ENCODE measurements at regions of chr14 and their contacts with region 1.

Region 1: DNA sequence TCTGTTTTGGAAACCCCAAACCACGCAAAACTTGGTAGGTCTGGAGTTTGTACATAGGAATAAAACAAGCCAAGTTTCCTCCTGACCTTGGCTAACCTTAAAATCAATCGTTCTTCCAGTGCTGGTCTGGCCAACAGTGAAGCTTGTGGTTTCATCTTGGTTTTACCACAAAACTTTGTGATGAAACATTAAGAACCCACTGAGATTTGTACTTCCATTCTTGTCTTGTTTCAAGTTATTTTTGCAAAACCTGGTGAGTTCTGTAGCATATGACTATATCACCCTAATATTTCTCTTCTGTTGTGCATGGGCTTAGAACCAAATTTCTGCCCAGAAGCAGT is 26.4 kb downstream of the SIX1 start:
- DNase-seq: no peak
- ATAC-seq: no peak
- H3K4me3 ChIP-seq: no peak overlapping the region
- H3K27ac ChIP-seq: no peak overlapping the region
- H3K4me1 ChIP-seq: peaks cover 0 to 7% of the 10 kb centered on the region in 2 experiments; a peak in 1 of 4 replicates
- H3K27me3 ChIP-seq: no peaks in the 10 kb centered on the region
- CTCF ChIP-seq: no peak
- POLR2A ChIP-seq: no peak
- RAD21 ChIP-seq: no peak

Region 2: GRCh38 chr14:59897761-59898383 is 725.0 kb before region 1 on chr14:
- CTCF ChIA-PET with region 1: no interaction called
- POLR2A ChIA-PET with region 1: no interaction called
- RAD21 ChIA-PET with region 1: no interaction called
- intact Hi-C with region 1: no loop called
- DNase-seq: peak; percentile 10
- ATAC-seq: peak; percentile 81
- H3K4me3 ChIP-seq: no peak overlapping the region
- H3K27ac ChIP-seq: no peak overlapping the region
- H3K4me1 ChIP-seq: no peaks in the 10 kb centered on the region
- H3K27me3 ChIP-seq: no peaks in the 10 kb centered on the region
- CTCF ChIP-seq: peak; percentile 44 to 57 (median 54); a peak in 5 of 6 replicates
- POLR2A ChIP-seq: no peak
- RAD21 ChIP-seq: peak; percentile 68

Region 3: GRCh38 chr14:60758885-60759284 is 136.0 kb after region 1 on chr14:
- CTCF ChIA-PET with region 1: no interaction called
- POLR2A ChIA-PET with region 1: no interaction called
- RAD21 ChIA-PET with region 1: no interaction called
- intact Hi-C with region 1: no loop called
- DNase-seq: no peak
- ATAC-seq: no peak
- H3K4me3 ChIP-seq: no peak overlapping the region
- H3K27ac ChIP-seq: no peak overlapping the region
- H3K4me1 ChIP-seq: peaks cover 26 to 46% of the 10 kb centered on the region in 2 experiments
- H3K27me3 ChIP-seq: no peaks in the 10 kb centered on the region
- CTCF ChIP-seq: no peak
- POLR2A ChIP-seq: no peak
- RAD21 ChIP-seq: no peak

Region 4: DNA sequence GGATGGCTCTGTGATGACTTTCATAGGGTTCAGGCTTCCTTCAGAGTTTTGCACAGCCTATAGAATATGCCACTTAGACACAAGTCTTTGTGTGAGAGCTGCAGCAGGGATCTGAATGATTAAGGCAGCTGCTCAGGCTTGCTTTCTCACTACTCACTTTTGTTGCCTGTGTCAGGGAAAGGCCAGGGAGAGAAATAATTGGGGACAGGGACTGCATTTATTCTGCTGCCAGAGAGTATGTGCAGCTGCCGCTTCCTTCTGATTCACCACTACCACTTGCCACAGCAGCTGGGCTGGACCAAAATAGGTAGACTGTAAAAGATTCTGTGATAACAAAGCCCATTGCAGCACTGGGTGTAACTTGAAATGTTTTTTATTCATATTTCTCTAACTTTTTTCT is 308.3 kb after region 1 on chr14:
- CTCF ChIA-PET with region 1: no interaction called
- POLR2A ChIA-PET with region 1: no interaction called
- RAD21 ChIA-PET with region 1: no interaction called
- intact Hi-C with region 1: no loop called
- DNase-seq: no peak
- ATAC-seq: no peak
- H3K4me3 ChIP-seq: no peak overlapping the region
- H3K27ac ChIP-seq: no peak overlapping the region
- H3K4me1 ChIP-seq: no peaks in the 10 kb centered on the region
- H3K27me3 ChIP-seq: no peaks in the 10 kb centered on the region
- CTCF ChIP-seq: no peak
- POLR2A ChIP-seq: no peak
- RAD21 ChIP-seq: no peak

Region 5: GRCh38 chr14:61025251-61026223 is 402.6 kb after region 1 on chr14:
- CTCF ChIA-PET with region 1: interaction called, 8 read pairs
- POLR2A ChIA-PET with region 1: no interaction called
- RAD21 ChIA-PET with region 1: interaction called in 1 of 2 experiments, 5 read pairs
- intact Hi-C with region 1: loop called (anchors 1 kb)
- DNase-seq: peak; percentile 41
- ATAC-seq: peak; percentile 82
- H3K4me3 ChIP-seq: no peak overlapping the region
- H3K27ac ChIP-seq: no peak overlapping the region
- H3K4me1 ChIP-seq: no peaks in the 10 kb centered on the region
- H3K27me3 ChIP-seq: no peaks in the 10 kb centered on the region
- CTCF ChIP-seq: peak; percentile 72 to 93 (median 89)
- POLR2A ChIP-seq: no peak
- RAD21 ChIP-seq: peak; percentile 89

Region 6: DNA sequence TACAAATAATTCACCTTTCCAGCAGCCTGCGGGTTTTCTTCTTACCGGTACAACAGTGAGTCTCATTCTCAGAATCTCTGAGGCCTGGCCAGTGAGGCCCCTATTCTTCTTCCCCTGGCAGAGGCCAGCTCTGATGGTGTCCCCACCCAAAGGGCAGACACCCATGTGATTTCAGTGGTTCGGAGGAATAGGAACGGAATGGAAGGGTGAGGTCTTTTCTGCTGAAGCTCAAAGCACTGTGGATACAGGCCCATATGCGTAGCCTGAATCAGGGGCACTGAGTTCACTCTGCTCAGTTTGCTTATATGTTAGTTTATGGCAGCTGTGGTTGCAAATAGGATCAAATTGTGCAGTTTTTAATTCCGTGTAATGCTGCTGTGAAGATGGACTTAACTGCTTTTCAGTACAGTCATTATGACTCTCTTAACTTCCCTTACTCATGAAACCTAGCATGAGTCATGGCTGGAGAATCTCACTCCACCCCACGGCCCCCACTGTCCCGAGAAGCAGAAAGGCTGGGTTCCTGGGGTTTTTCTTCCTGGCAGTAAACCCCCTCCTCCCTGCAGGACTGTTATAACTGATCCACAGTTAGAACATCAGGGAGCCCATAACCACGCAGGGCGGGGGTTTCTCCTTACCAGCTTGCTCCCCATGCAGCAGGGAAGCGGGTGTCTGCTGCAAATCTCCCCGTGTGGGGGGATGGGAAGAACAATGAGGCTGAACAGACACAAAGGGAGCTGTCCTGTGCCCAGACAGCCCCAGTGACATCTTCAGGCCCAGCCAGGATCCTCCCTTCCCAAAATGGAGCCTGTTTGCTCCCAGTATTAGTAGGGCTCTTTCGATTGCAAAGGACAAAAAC is 480.8 kb after region 1 on chr14:
- CTCF ChIA-PET with region 1: no interaction called
- POLR2A ChIA-PET with region 1: no interaction called
- RAD21 ChIA-PET with region 1: no interaction called
- intact Hi-C with region 1: loop called (anchors 1 kb)
- DNase-seq: peak; percentile 76
- ATAC-seq: peak; percentile 85
- H3K4me3 ChIP-seq: peak overlapping the region; percentile 11 to 55
- H3K27ac ChIP-seq: peak overlapping the region; percentile 91
- H3K4me1 ChIP-seq: peaks cover 27 to 39% of the 10 kb centered on the region in 2 experiments
- H3K27me3 ChIP-seq: no peaks in the 10 kb centered on the region
- CTCF ChIP-seq: no peak
- POLR2A ChIP-seq: no peak
- RAD21 ChIP-seq: peak; percentile 37; the same call in 1 of the 2 replicates